Body of pancreas (tissue), 4 donors: ENCODE measurements at regions of chr11 and their contacts with region 1.

Region 1: GRCh38 chr11:2196970-2197770 is 25.6 kb upstream of the TH start:
- DNase-seq: peak; percentile 81 to 87 (median 83)
- ATAC-seq: peak; percentile 75
- H3K4me3 ChIP-seq: no peak overlapping the region
- H3K27ac ChIP-seq: no peak overlapping the region
- H3K4me1 ChIP-seq: peaks cover 21% of the 10 kb centered on the region
- H3K27me3 ChIP-seq: no peaks in the 10 kb centered on the region
- CTCF ChIP-seq: peak; percentile 84 to 95 (median 92)
- POLR2A ChIP-seq: no peak

Region 2: DNA sequence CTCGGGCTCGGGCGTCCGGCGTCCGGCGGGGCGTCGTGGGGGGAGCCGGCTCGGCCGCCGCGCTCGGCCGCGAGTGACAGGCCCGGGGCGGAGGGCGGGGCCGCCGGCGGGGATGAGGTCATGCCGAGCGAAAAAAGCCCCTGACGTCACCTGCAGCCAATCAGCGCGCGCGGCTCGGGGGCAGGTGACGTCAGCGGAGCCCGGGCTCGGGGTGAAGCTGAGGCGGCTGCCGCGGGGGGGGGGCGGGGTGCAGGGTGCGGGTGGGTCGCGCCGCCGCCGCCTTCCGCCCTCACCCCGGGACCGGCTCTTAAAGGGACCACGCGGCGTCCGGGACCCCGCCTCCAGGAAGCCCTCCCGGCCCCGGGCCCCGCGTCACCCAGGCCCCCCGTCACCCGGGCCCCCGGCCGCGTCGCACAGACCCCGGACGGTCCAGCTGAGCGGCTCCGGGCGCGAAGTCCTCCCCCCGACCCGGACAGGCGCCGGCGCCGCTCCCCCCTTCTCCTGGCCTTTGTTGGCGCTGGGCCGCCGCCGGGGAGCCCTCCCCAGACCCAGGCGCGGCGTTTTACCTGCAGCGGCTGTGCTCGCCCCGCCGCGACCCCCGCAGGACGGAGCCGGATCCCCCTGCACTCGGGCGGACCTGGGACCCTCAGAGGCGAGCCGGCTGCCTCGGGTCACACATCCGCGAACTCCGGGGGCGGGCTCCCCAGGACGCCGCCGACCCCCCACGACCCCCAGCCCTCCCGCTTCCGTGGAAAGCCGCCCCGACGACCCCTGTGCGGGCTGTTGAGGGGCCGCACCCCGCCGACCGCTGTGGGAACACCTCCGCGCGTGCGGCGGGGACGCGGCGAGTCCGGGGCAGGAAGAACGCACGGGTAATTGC is 624.7 kb before region 1 on chr11 and contains the start of gene DUSP8:
- intact Hi-C with region 1: no loop called
- DNase-seq: peak; percentile 95 to 97 (median 97)
- ATAC-seq: peak; percentile 71
- H3K4me3 ChIP-seq: peak within 1 kb of the TSS; percentile 41 to 84
- H3K27ac ChIP-seq: peak within 1 kb of the TSS; percentile 86 to 100 (median 94)
- H3K4me1 ChIP-seq: peaks cover 56% of the 10 kb centered on the region
- H3K27me3 ChIP-seq: no peaks in the 10 kb centered on the region
- CTCF ChIP-seq: no peak
- POLR2A ChIP-seq: peak; percentile 44 to 78 (median 62)
- total RNA-seq, gene DUSP8: 7.0 to 19.1 TPM

Region 3: DNA sequence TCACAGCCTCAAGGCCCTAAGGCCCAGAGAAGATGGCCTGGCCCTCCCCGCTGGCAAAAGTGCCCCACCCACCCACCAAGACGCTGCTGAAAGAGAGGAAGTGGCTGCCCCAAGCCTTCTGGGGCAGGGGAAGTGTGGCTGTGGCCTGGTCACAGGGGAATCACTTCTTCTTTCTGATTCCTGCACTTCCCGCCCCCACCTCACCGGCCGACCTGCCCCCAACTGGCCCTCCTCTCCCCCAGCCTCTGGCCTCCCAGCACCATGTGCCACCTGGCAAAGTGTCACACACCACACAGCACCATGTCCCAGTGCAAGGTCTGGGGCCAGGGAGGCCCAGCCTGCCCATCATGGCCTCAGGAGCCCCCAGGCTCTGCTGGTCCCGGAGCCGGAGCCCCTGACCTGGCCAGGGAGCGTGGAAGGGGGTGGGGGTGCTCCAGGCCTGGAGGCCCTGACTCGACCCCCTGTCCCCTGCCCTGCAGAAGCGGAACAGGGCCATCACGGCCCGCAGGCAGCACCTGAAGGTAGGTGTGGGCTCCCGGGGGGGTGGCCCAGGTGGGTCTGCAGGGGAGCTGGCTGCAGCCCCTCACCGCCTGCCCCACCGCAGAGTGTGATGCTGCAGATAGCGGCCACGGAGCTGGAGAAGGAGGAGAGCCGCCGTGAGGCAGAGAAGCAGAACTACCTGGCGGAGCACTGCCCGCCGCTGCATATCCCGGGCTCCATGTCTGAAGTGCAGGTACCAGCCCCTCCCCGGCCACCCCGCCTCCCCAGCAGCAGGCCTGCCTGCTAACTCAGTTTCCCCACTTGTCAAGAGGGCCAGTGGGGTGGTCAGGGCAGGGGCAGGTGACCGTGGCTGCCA is 357.0 kb before region 1 on chr11:
- intact Hi-C with region 1: no loop called
- DNase-seq: peak in 2 of 4 donors; percentile 31 to 69
- ATAC-seq: no peak
- H3K4me3 ChIP-seq: no peak overlapping the region
- H3K27ac ChIP-seq: peak overlapping the region in 3 of 4 donors; percentile 94 to 98 (median 96)
- H3K4me1 ChIP-seq: peaks cover 79% of the 10 kb centered on the region
- H3K27me3 ChIP-seq: no peaks in the 10 kb centered on the region
- CTCF ChIP-seq: no peak
- POLR2A ChIP-seq: no peak

Region 4: DNA sequence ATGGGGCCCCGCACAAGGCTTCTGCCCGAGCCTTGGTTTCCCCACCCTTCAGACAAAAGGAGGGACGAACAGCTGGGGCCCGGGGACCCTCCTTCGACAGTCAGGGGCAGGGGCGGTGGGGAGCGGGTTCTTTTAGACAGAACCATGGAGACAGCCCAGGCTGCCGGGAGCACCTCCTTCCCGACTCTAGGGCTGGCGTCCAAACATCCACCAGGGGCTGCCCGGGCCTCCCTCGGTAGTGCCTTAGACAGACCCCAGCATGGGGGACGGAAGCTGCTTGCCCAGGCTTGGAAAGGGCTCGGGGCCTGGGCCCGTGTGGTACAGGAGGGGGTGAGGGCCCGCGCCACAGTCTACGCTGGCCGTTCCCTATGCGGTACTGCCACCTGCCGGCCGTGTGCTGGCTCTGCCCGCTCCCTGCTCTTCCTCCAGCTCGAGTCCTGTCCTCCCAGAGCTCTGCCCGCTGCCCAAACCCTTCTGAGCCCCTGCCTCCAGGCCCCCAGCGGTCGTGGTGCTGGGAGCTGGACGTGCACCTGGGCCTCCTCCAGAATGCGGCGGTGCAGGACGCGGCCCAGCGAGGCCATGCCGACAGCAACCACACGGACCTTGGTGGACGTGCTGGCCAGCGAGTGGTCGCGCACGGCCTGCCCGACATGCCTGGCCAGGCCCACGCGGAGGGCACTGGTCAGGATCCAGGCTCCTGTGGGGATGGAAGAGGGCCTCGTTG is 223.5 kb after region 1 on chr11:
- intact Hi-C with region 1: loop called (anchors 5 kb)
- DNase-seq: peak; percentile 75 to 80 (median 78)
- ATAC-seq: peak; percentile 90
- H3K4me3 ChIP-seq: no peak overlapping the region
- H3K27ac ChIP-seq: no peak overlapping the region
- H3K4me1 ChIP-seq: peaks cover 14% of the 10 kb centered on the region
- H3K27me3 ChIP-seq: no peaks in the 10 kb centered on the region
- CTCF ChIP-seq: peak; percentile 90 to 97 (median 93)
- POLR2A ChIP-seq: no peak